ENCODE measurements at regions of chr2 and their contacts with region 1.

Region 1: DNA sequence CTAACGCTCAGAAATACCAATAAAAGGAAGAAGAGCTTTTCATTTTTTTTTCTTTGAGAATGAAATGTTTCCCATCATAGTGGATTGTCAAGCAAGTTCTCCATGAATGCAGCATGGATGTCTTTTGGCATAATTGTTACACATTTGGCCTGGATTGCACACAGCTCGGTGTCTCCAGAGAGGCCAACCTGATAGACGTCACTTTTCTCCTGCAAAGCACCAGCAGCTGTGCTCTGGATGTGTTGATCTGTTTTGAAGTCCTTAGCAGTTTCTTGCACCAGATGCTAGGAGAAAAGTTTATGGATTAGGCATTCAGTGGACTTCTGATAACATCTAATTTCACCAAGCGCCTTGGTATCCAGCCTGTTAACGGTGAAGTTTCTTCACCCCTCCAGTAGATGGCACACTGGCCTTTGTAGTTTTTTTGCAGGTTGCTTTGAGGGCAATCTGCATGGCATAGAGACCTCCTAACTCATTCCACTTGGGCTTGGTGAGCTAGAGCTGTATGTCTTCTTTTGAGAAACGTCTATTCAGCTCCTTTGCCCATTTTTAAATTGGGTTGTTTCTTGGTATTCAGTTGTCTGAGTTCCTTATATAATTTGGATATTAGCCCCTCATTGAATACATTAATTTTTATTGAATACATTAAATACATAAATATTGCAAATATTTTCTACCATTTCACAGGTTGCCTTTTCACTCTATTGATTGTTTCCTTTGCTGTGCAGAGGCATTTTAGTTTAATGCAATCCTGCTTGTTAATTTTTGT is 59.7 kb downstream of the PTH2R start:
- DNase-seq: peak in 1 of 10 donors; percentile 10

Region 2: DNA sequence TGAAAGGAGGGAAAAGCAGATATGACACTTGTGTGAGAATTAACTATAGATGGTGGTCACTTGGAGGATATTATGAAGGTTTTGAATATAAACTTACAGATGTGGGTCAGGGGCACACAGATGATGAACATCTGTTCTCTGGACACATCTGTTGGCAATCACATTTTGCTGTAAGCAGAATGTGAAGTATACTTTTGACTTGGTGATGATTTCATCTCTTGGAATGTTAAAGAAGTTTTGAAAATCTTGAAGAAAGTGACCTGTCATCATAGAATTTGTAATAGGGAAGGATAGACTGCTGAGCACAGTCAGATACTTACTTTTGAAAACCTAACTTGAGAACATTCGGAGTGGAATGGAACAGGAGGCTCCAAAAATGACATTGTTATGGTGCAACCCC is 160.0 kb before region 1 on chr2:
- intact Hi-C with region 1: no loop called
- DNase-seq: no peak

Region 3: GRCh38 chr2:209208211-209208610 is 741.9 kb after region 1 on chr2:
- intact Hi-C with region 1: loop called (anchors 10 kb)
- DNase-seq: peak in 4 of 10 donors; percentile 16 to 69 (median 28)

Region 4: GRCh38 chr2:209322041-209322440 is 855.7 kb after region 1 on chr2:
- intact Hi-C with region 1: loop called (anchors 5 kb)
- DNase-seq: no peak